Activated B cell treated with CpG ODN at 0.5 μM for 24 hours (primary cell): ENCODE measurements at regions of chr19 and their contacts with region 1.

Region 1: DNA sequence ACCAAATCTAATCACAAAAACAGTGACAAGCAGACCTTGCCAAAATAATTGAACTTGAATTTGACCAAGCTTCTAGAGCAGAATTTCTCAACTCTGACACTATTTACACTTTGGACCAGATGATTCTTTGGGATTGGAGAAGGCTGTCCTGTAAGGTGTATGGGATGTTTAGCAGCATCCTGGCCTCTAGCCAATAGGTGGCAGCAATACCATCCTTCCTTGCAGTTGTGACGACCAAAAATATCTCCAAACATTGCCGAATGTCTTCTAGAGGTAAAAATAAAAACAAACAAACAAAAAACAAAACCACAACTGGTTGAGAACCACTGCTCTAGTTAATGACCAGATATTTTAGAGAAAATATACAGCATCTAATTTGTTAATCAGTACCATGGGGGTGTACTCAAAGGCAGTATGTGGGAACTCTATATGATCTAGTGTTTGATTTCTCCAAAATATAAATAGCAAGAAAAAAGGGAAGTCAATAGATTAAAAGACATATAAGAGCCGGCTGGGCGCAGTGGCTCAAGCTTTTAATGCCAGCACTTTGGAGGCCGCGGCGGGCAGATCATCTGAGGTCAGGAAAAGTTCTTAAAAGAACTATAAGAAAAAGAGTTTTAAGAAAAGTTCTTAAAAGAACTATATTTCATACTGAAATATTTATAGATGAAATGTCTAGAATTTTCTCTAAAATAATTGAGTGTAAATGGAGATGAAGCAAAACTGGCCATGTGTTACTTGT is 60.9 kb upstream of the ZNF527 start:
- DNase-seq: no peak
- ATAC-seq: no peak
- H3K4me3 Mint-ChIP-seq: no peak overlapping the region
- H3K27ac Mint-ChIP-seq: no peak overlapping the region
- H3K4me1 Mint-ChIP-seq: peaks cover 17% of the 10 kb centered on the region
- H3K27me3 Mint-ChIP-seq: peaks cover 12% of the 10 kb centered on the region
- CTCF ChIP-seq: no peak

Region 2: DNA sequence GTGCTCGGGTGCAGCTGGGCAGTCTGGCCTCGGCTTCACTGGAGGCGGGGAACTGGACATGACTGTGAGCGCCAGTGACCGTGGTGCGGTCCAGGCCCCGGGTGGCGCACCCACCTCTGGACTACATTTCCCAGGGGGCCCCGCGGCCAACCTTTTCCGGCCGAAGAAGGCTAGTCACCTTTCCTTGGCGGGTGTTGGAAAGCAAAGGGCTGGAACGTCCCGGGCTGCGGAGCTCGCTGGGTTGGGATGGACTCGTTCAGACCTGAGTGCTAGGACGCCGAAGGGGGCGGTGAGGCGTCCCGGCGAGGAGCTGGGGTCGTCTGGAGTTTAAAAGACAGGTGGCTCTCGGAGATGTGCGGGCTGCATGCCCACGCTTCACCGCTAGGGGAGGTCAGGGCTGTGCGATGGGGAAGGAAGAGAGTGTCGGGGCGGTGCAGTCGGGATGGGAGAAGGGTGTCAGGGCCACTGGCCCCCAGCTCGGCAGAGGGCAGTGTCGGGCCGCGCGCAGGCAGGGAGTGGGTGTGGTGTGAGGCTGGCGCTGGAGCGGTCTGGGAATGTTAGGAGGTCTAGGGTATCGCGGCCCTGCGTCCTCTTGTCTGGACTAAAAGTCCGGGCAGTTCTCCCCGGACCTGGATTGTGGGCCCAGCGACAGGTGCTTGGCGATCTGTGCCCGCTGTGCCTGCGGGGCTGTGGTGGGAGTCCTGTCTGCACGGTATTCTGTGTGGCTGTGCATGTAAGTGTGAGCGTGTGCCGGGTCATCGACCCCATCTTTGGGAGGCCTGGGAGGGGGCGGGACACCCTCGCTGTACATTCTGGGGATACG is 336.8 kb before region 1 on chr19:
- CTCF ChIA-PET with region 1: no interaction called
- POLR2A ChIA-PET with region 1: no interaction called
- intact Hi-C with region 1: loop called (anchors 10 kb)
- DNase-seq: peak; percentile 75
- ATAC-seq: peak; percentile 97
- H3K4me3 Mint-ChIP-seq: peak overlapping the region; percentile 98
- H3K27ac Mint-ChIP-seq: peak overlapping the region; percentile 94
- H3K4me1 Mint-ChIP-seq: peaks cover 10% of the 10 kb centered on the region
- H3K27me3 Mint-ChIP-seq: no peaks in the 10 kb centered on the region
- CTCF ChIP-seq: peak; percentile 38

Region 3: DNA sequence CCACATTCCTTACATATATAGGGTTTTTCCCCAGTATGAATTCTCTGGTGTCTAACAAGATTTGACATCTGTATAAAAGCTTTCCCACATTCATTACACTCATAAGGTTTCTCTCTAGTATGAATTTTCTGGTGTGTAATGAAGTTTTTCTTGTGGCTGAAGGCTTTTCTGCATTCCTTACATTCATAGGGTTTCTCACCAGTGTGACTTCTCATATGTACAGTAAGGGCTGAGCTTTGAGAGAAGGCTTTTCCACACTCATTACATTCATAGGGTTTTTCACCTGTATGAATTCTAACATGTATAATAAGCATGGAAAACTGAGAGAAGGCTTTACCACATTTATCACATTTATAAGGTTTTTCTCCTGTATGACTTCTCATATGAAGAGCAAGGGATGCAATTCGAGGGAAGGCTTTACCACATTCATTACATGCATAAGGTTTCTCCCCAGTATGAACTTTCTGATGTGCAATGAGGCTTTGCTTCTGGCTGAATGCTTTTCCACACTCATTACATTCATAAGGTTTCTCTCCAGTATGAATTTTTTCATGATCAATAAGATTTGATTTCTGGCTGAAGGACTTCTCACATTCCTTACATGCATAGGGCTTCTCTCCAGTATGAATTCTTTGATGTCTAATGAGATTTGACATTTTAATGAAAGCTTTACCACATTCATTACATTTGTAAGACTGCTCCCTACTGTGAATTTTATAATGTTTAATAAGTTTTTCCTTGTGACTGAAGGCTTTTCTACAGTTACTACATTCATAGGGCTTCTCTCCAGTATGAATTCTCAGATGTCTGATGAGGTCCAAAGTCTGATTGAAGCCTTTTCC is 103.5 kb after region 1 on chr19:
- CTCF ChIA-PET with region 1: no interaction called
- POLR2A ChIA-PET with region 1: no interaction called
- intact Hi-C with region 1: no loop called
- DNase-seq: no peak
- ATAC-seq: no peak
- H3K4me3 Mint-ChIP-seq: no peak overlapping the region
- H3K27ac Mint-ChIP-seq: no peak overlapping the region
- H3K4me1 Mint-ChIP-seq: no peaks in the 10 kb centered on the region
- H3K27me3 Mint-ChIP-seq: no peaks in the 10 kb centered on the region
- CTCF ChIP-seq: no peak

Region 4: DNA sequence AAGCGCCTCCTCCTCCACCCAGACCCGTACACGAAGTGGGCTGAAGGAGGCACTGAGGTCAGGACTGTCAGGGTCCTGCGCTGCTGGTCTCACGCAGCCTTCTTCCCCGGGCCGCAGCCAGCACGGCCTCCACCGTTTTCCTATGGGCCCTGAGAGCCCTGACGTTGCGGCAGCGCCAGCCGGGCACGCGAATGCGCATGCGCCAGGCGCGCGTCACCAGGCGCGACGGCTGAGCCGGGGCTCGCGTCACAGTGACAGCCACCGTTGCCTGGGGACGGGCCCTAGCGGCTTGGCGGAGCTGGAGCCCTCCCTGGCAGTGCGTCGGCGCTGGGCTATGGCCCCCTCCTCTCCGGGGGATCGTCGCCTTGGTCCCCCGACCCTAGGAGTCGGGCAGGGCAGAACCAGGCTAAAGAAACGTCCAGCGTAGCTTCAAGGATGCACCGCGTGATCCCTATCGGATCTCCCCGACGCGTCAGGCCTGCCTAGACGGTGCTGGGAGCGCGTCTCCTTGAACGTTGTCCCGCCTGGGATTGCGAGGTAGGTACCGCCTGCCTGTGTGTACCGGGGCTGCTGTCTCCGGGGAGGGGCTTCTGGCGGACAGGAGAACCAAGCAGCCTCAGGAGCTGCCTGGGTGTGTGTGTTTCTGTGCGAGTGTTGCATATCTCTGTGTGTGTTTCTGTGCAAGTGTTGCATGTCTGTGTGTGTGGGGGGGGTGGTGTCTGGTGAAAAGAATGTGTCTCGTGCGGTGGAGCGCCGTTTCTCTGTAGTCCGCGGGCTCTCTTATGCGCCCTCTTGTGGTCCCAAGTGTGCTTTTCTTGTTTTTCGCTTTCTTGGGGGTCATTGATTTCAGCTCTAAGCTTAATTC is 241.4 kb after region 1 on chr19:
- CTCF ChIA-PET with region 1: no interaction called
- POLR2A ChIA-PET with region 1: no interaction called
- intact Hi-C with region 1: loop called (anchors 10 kb)
- DNase-seq: peak; percentile 70
- ATAC-seq: peak; percentile 85
- H3K4me3 Mint-ChIP-seq: peak overlapping the region; percentile 93
- H3K27ac Mint-ChIP-seq: peak overlapping the region; percentile 91
- H3K4me1 Mint-ChIP-seq: peaks cover 12% of the 10 kb centered on the region
- H3K27me3 Mint-ChIP-seq: no peaks in the 10 kb centered on the region
- CTCF ChIP-seq: no peak

Region 5: GRCh38 chr19:37931881-37932655 is 622.1 kb after region 1 on chr19:
- CTCF ChIA-PET with region 1: no interaction called
- POLR2A ChIA-PET with region 1: no interaction called
- intact Hi-C with region 1: no loop called
- DNase-seq: peak; percentile 52
- ATAC-seq: peak; percentile 30
- H3K4me3 Mint-ChIP-seq: peak overlapping the region; percentile 83
- H3K27ac Mint-ChIP-seq: peak overlapping the region; percentile 92
- H3K4me1 Mint-ChIP-seq: peaks cover 94% of the 10 kb centered on the region
- H3K27me3 Mint-ChIP-seq: no peaks in the 10 kb centered on the region
- CTCF ChIP-seq: no peak